Activated CD8-positive, alpha-beta memory T cell treated with anti-CD3 and anti-CD28 coated beads, Interleukin-2, amount 10 ng/mL, durations not matched to agents 7 days and 5 days (primary cell): ENCODE measurements at regions of chr6 and their contacts with region 1.

Region 1: GRCh38 chr6:33958526-33959333 is 154.9 kb upstream of the MLN start:
- DNase-seq: no peak
- ATAC-seq: no peak
- H3K4me3 Mint-ChIP-seq: no peak overlapping the region
- H3K27ac Mint-ChIP-seq: no peak overlapping the region
- H3K4me1 Mint-ChIP-seq: peaks cover 3% of the 10 kb centered on the region
- H3K27me3 Mint-ChIP-seq: peaks cover 7% of the 10 kb centered on the region

Region 2: DNA sequence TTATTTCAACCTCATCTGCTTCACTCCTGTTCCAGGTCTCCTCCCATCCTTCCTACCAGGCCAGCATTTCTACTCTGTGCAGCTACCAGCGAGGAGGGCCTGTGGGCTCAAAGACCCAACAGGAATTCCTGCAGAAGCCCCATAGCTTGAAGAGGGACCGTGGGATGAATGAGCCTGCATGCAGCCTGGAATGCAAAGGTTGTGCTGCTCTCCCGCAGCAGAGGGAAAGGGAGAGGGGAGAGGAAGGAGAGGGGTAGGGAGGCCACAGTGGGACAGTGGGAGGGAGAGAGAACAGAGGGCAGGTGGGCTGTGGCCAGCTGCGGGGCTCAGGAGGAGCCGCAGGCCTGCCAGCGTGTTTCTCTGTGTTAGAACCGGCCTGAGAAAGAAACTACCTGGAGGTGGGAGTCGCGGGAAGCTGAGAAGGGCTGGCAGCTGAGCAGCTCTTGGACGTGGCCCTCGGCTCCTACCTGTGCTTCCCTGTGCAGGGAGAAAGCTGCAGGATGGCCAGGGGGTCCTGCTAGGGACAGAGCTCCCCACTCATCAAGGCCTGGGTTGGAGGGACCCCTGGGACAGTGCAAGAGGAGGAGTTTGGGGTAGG is 88.8 kb before region 1 on chr6:
- CTCF ChIA-PET with region 1: no interaction called
- DNase-seq: no peak
- ATAC-seq: no peak
- H3K4me3 Mint-ChIP-seq: no peak overlapping the region
- H3K27ac Mint-ChIP-seq: no peak overlapping the region
- H3K4me1 Mint-ChIP-seq: peaks cover 3% of the 10 kb centered on the region
- H3K27me3 Mint-ChIP-seq: peaks cover 25% of the 10 kb centered on the region

Region 3: DNA sequence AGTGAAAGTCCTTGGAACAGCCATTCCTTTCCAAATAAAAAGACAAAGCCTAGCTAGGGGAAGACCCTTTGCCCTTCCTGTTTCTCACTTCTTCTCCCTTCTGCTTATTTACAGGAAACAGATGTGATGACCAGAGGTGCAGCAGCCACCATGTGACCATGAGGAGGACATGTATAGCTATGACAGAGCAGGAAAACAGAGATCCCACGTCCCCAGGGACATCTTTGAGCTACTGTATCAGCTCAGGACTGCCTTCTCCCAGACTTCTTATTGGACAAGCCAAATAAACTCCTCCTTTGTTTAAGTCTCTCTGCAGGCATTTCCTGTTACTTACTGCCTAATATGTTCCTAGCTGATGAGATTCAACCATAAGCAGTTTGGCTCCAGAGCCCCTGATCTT is 21.8 kb before region 1 on chr6:
- CTCF ChIA-PET with region 1: interaction called, 12 read pairs
- DNase-seq: no peak
- ATAC-seq: no peak
- H3K4me3 Mint-ChIP-seq: no peak overlapping the region
- H3K27ac Mint-ChIP-seq: no peak overlapping the region
- H3K4me1 Mint-ChIP-seq: peaks cover 18% of the 10 kb centered on the region
- H3K27me3 Mint-ChIP-seq: peaks cover 40% of the 10 kb centered on the region